A673 (cell line): ENCODE measurements at regions of chr22 and their contacts with region 1.

Region 1: GRCh38 chr22:24433813-24434470 is 6.5 kb downstream of the ADORA2A start:
- DNase-seq: peak; percentile 62
- H3K4me3 ChIP-seq: no peak overlapping the region
- H3K27ac ChIP-seq: no peak overlapping the region
- H3K4me1 ChIP-seq: peaks cover 40% of the 10 kb centered on the region
- H3K27me3 ChIP-seq: no peaks in the 10 kb centered on the region
- CTCF ChIP-seq: no peak

Region 2: GRCh38 chr22:24409707-24410106 is 24.2 kb before region 1 on chr22:
- CTCF ChIA-PET with region 1: interaction called, 15 read pairs
- POLR2A ChIA-PET with region 1: no interaction called
- intact Hi-C with region 1: no loop called
- DNase-seq: no peak
- H3K4me3 ChIP-seq: no peak overlapping the region
- H3K27ac ChIP-seq: no peak overlapping the region
- H3K4me1 ChIP-seq: no peaks in the 10 kb centered on the region
- H3K27me3 ChIP-seq: no peaks in the 10 kb centered on the region
- CTCF ChIP-seq: no peak